ENCODE measurements at regions of chr15 and their contacts with region 1.

Region 1: DNA sequence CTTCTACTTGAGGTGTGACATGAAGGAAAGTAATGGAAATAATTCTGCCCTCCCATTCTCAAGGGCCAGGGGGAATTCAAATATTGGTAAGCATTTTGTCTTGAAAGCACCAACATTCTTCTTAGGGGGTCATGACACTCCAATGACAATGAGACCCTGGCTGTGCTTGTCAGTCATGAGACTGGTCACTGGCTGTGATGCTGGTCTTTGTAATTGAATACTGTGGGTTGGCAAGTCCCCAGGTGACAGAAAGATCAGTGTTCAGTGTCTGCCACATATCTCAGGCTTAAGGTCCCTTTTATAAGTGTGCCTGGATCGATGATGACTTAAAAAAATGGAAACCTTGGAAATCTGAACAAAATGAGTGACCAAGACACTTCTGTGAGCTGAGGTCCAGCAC is 151.4 kb downstream of the SNRPN start:
- DNase-seq: no peak
- H3K4me3 ChIP-seq: no peak overlapping the region
- H3K27ac ChIP-seq: no peak overlapping the region
- H3K4me1 ChIP-seq: no peaks in the 10 kb centered on the region
- H3K27me3 ChIP-seq: no peaks in the 10 kb centered on the region
- CTCF ChIP-seq: no peak
- POLR2A ChIP-seq: no peak

Region 2: GRCh38 chr15:24752354-24752753 is 353.9 kb before region 1 on chr15:
- intact Hi-C with region 1: no loop called
- DNase-seq: no peak
- H3K4me3 ChIP-seq: no peak overlapping the region
- H3K27ac ChIP-seq: no peak overlapping the region
- H3K4me1 ChIP-seq: no peaks in the 10 kb centered on the region
- H3K27me3 ChIP-seq: no peaks in the 10 kb centered on the region
- CTCF ChIP-seq: no peak
- POLR2A ChIP-seq: no peak

Region 3: DNA sequence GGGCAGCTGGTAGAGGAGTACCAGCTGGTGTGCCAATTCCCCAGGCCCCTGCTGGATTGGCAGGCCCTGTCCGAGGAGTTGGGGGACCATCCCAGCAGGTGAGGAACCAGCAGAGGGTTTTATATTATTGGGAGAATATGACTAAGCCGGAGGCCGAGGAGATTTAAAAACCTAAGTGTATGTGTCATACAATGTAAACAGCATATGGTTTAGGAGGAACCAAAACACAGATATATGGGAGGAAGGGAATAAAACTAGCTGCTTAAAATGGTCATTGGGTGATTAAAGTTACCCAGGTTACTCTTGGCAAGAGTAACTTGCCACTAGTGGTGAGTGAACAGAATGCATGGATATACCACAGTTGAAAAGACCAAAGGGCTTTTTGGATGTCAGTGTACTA is 129.3 kb before region 1 on chr15:
- intact Hi-C with region 1: loop called in 1 of 2 experiments (anchors 10 kb)
- DNase-seq: no peak
- H3K4me3 ChIP-seq: no peak overlapping the region
- H3K27ac ChIP-seq: no peak overlapping the region
- H3K4me1 ChIP-seq: no peaks in the 10 kb centered on the region
- H3K27me3 ChIP-seq: no peaks in the 10 kb centered on the region
- CTCF ChIP-seq: no peak
- POLR2A ChIP-seq: no peak

Measured in adrenal gland (tissue), 19 donors.